HEK293 (cell line): ENCODE measurements at regions of chr2 and their contacts with region 1.

Region 1: GRCh38 chr2:72887754-72888437 is 688 bp downstream of the SPR start:
- H3K4me3 ChIP-seq: peak overlapping the region; percentile 55
- H3K27ac ChIP-seq: peak overlapping the region; percentile 78
- H3K4me1 ChIP-seq: no peaks in the 10 kb centered on the region
- CTCF ChIP-seq: peak; percentile 85

Region 2: DNA sequence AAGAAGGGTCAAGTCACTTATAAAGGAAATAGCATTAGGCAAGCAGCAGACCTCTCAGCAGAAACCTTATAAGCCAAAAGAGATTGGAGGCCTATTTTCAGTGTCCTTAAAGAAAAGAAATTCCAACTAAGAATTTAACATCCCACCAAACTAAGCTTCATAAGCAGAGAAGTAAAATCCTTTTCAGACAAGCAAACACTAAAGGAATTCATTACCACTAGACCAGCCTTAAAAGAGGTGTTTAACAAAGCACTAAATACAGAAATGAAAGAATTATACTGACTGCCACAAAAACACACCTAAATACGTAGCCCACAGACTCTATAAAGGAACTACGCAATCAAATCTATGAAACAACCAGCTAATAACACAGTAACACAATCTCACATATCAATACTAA is 222.4 kb before region 1 on chr2:
- CTCF ChIA-PET with region 1: no interaction called
- POLR2A ChIA-PET with region 1: no interaction called
- H3K4me3 ChIP-seq: no peak overlapping the region
- H3K27ac ChIP-seq: no peak overlapping the region
- H3K4me1 ChIP-seq: no peaks in the 10 kb centered on the region
- CTCF ChIP-seq: no peak

Region 3: GRCh38 chr2:72770879-72771461 is 116.9 kb before region 1 on chr2:
- CTCF ChIA-PET with region 1: interaction called, 24 read pairs
- POLR2A ChIA-PET with region 1: no interaction called
- H3K4me3 ChIP-seq: no peak overlapping the region
- H3K27ac ChIP-seq: no peak overlapping the region
- H3K4me1 ChIP-seq: no peaks in the 10 kb centered on the region
- CTCF ChIP-seq: peak; percentile 66

Region 4: DNA sequence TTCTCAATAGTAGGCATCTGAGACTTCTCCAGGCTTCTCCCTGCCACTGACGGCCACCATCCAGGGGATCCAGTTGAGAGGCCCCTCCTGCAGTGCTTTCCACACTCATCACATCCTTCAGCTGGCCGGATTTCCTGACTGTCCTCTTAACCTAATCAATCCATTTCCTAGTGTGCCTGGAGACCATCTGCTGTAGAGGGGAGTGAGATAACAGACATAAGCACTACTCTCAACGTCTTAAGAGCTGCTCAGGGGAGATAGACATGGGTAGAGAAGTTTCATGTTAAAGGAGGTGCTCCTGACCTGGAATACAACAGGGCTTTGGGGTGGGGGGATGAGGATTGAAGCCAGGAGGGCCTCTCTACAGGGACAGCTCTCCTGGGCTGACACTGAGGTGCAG is 13.5 kb after region 1 on chr2:
- CTCF ChIA-PET with region 1: interaction called, 31 read pairs
- POLR2A ChIA-PET with region 1: interaction called, 4 read pairs
- H3K4me3 ChIP-seq: no peak overlapping the region
- H3K27ac ChIP-seq: no peak overlapping the region
- H3K4me1 ChIP-seq: no peaks in the 10 kb centered on the region
- CTCF ChIP-seq: no peak

Region 5: DNA sequence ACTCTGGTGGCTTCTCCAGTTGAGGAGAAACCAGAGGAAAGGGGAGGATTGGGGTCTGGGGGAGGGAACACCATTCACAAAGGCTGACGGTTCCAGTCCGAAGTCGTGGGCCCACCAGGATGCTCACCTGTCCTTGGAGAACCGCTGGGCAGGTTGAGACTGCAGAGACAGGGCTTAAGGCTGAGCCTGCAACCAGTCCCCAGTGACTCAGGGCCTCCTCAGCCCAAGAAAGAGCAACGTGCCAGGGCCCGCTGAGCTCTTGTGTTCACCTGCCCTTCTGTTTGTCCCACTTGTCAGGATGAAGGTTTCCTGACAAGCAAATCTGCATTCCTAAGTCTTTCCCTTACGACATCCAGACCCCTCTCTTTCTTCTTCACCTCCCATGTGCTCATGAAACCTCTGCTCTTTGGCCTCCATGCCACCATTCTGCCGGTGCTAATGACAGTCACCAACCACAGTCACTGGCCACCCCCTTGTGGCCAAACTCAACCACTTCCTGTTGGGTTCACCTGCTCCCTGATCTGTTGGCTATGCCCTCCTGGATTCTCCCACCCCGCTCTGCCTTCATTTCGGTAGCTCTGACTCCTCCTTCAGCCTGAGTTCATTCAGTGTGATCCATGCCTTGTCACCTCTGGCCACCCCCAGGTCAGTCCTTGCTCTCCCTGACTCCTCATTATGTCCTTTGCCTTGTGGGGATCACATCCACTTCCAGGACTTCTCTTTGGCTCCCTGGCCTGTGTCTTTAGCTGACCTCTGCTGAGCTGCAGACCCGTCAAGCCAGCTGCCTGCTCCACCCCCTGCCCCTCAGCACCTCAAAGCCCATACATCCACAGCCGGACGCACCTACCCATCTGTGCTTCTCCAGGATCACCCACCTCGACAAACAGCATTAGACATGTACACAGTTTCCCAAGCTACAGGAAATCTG is 47.1 kb after region 1 on chr2:
- CTCF ChIA-PET with region 1: interaction called, 85 read pairs
- POLR2A ChIA-PET with region 1: no interaction called
- H3K4me3 ChIP-seq: no peak overlapping the region
- H3K27ac ChIP-seq: no peak overlapping the region
- H3K4me1 ChIP-seq: no peaks in the 10 kb centered on the region
- CTCF ChIP-seq: peak; percentile 68

Region 6: GRCh38 chr2:72973566-72974435 is 85.9 kb after region 1 on chr2:
- CTCF ChIA-PET with region 1: interaction called, 168 read pairs
- POLR2A ChIA-PET with region 1: no interaction called
- H3K4me3 ChIP-seq: no peak overlapping the region
- H3K27ac ChIP-seq: no peak overlapping the region
- H3K4me1 ChIP-seq: no peaks in the 10 kb centered on the region
- CTCF ChIP-seq: peak; percentile 68

Region 7: GRCh38 chr2:73163483-73164367 is 275.8 kb after region 1 on chr2:
- CTCF ChIA-PET with region 1: interaction called, 68 read pairs
- POLR2A ChIA-PET with region 1: no interaction called
- H3K4me3 ChIP-seq: no peak overlapping the region
- H3K27ac ChIP-seq: no peak overlapping the region
- H3K4me1 ChIP-seq: no peaks in the 10 kb centered on the region
- CTCF ChIP-seq: peak; percentile 62